ENCODE measurements at regions of chr12 and their contacts with region 1.

Region 1: DNA sequence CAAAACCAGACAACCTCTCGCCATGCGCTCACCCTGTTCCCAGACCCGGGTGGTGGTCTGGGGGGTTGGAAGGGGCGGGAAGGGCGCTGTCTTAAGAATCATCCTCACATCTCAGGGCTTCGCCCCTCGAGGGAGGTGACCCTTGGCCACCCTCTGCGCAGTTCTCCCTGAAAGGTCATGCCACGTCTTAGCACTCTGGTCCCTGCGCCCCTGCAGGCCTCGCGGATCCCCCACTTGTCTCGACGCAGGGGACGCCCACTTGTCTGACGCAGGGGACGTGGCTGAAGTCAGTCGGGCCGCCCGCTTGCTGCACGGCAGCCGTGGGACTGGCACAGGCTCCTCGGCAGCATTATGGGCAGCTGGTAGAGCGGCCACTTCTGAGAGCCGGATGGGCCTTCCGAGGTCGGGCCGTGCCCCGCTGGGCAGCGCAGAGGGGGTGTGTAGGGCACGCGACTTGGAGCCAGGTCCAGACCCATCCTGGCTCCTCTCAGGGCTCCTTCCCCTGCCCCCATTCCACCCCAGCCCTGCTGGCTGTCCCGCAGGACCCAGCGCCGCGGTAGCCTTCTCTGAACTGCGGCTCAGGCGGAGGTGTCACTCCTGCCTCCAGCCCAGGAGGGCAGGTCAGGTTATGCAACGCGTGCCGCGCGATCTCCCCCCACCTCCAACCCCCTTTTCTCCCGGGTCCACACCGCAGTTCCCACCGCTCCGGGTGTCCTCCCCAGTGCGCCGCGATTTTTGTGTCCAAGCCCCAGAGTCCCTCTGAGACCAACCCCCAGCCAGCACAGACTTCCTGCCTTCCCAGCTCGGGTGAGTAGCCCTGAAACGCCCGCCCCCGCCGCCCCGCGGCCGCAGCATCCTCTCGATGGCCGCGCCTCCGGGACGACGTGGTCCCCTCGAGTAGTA is 40.9 kb upstream of the CAPRIN2 start:
- DNase-seq: peak; percentile 75
- H3K27ac ChIP-seq: peak overlapping the region; percentile 100
- CTCF ChIP-seq: no peak

Region 2: GRCh38 chr12:30754709-30755394 is 40.8 kb before region 1 on chr12 and contains the start of gene CAPRIN2:
- CTCF ChIA-PET with region 1: interaction called, 10 read pairs
- POLR2A ChIA-PET with region 1: interaction called, 9 read pairs
- DNase-seq: peak; percentile 87
- H3K27ac ChIP-seq: peak within 1 kb of the TSS; percentile 87
- CTCF ChIP-seq: peak; percentile 67

Measured in RWPE1 (cell line).